Right ventricle myocardium superior (tissue), 1 donor: ENCODE measurements at regions of chr9 and their contacts with region 1.

Region 1: GRCh38 chr9:19618816-19619215 is 170.0 kb downstream of the SLC24A2 start:
- DNase-seq: no peak
- ATAC-seq: no peak

Region 2: DNA sequence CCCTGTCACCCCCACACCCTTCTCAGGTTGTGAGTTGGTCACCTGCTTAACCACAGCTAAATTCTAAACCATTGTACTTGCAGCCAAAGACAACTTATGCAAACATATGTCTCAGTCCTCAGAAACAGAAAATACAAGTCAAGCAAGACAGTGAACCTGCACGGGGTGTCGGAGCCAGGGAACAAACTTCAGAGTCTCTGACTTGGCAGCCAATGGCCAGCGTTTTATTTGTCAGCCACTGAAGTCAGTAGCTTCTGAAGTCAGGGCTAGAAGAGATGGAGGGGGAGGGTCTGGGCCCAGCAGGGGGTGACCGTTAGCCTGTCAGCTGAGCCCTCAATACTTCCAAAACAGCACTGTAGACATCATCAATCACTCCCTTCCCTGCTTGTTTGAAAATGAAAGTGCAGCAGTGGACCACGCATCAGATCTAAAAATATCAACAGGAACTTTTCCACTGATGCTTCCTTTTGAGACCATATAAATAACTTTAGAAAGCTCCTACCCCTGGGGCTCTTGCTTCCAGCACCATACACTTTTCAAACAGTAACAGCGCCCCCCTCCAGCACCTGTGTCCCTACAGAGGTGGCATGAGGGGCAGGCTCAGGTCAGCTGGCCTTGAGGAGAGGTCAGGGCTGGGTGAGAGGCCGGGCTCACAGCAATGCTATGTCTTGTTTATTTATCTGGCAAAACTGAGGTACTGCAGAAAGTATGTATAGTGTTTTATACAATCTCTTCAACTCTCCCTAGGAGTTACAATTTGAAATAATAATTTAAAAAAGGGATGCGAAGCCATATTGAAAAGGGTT is 67.5 kb before region 1 on chr9:
- intact Hi-C with region 1: loop called (anchors 10 kb)
- DNase-seq: no peak
- ATAC-seq: no peak